K562 (cell line): ENCODE measurements at regions of chr20 and their contacts with region 1.

Region 1: DNA sequence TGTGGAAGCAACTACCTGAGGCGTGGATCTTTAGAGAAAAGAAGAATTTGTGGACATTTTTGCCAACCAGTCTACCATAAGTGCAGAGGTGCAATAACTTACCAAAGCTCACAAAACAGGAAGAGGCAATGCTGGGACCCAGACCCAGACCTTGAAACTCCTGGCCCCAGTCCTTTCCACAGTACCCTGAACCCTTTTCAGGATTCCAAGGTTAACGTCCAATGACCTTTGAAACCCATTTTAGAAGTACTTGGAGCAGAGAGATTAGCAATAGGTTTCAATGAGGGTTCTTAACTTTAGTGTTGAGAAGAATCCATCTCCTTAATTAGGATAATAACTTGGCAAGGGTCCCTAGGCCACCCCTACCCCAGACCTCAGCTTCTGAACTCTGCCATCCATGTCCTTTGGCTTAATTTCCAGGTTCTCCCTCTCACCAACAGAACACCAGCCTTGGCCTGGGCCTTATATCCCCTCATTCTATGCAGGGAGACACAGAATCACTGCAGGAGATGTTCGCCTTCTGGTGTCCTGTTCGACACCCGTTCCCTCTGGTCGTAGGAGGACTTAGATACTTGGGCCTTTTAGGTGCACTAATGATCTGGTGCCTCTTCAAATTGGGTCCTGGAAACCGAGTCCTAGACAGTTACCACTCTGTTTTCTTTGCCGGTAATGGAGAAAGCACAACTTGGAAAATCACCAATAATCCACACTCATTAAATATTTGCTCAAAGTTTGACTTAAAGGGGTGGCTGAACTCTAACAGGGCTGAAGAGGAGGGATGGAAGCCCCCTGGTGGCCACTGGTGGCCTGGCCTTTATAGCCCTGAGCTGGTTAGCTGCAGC is 40.6 kb downstream of the ISM1 start:
- DNase-seq: peak; percentile 42 to 56 (median 50)
- ATAC-seq: peak; percentile 96
- H3K4me3 ChIP-seq: no peak overlapping the region
- H3K27ac ChIP-seq: no peak overlapping the region
- H3K4me1 ChIP-seq: no peaks in the 10 kb centered on the region
- H3K27me3 ChIP-seq: no peaks in the 10 kb centered on the region
- CTCF ChIP-seq: peak; percentile 51 to 74 (median 56)
- EP300 ChIP-seq: no peak
- POLR2A ChIP-seq: no peak
- RAD21 ChIP-seq: peak in 1 of 2 experiments; percentile 39; a peak in 2 of 4 replicates

Region 2: GRCh38 chr20:12891643-12892042 is 370.0 kb before region 1 on chr20:
- CTCF ChIA-PET with region 1: no interaction called
- POLR2A ChIA-PET with region 1: no interaction called
- in situ Hi-C with region 1: no loop called
- intact Hi-C with region 1: no loop called
- DNase-seq: no peak
- ATAC-seq: no peak
- H3K4me3 ChIP-seq: no peak overlapping the region
- H3K27ac ChIP-seq: no peak overlapping the region
- H3K4me1 ChIP-seq: no peaks in the 10 kb centered on the region
- H3K27me3 ChIP-seq: no peaks in the 10 kb centered on the region
- CTCF ChIP-seq: no peak
- EP300 ChIP-seq: no peak
- POLR2A ChIP-seq: no peak
- RAD21 ChIP-seq: no peak

Region 3: GRCh38 chr20:13119583-13119982 is 142.1 kb before region 1 on chr20:
- CTCF ChIA-PET with region 1: no interaction called
- POLR2A ChIA-PET with region 1: no interaction called
- in situ Hi-C with region 1: no loop called
- intact Hi-C with region 1: loop called (anchors 2 kb)
- DNase-seq: peak; percentile 13 to 44 (median 38)
- ATAC-seq: peak; percentile 86
- H3K4me3 ChIP-seq: no peak overlapping the region
- H3K27ac ChIP-seq: no peak overlapping the region
- H3K4me1 ChIP-seq: no peaks in the 10 kb centered on the region
- H3K27me3 ChIP-seq: no peaks in the 10 kb centered on the region
- CTCF ChIP-seq: peak; percentile 45 to 63 (median 54); a peak in 5 of 6 replicates
- EP300 ChIP-seq: no peak
- POLR2A ChIP-seq: no peak
- RAD21 ChIP-seq: peak; percentile 47 to 67